Stomach (tissue), 19 donors: ENCODE measurements at regions of chr11 and their contacts with region 1.

Region 1: GRCh38 chr11:67082035-67082791 is 25.6 kb downstream of the RHOD start:
- DNase-seq: peak in 1 of 2 donors; percentile 71
- H3K4me3 ChIP-seq: no peak overlapping the region
- H3K27ac ChIP-seq: no peak overlapping the region
- H3K4me1 ChIP-seq: peaks cover 10 to 28% (median 11%) of the 10 kb centered on the region in 4 donors
- H3K27me3 ChIP-seq: peaks cover 0 to 15% (median 0%) of the 10 kb centered on the region in 3 donors
- CTCF ChIP-seq: no peak
- EP300 ChIP-seq: no peak
- POLR2A ChIP-seq: no peak

Region 2: DNA sequence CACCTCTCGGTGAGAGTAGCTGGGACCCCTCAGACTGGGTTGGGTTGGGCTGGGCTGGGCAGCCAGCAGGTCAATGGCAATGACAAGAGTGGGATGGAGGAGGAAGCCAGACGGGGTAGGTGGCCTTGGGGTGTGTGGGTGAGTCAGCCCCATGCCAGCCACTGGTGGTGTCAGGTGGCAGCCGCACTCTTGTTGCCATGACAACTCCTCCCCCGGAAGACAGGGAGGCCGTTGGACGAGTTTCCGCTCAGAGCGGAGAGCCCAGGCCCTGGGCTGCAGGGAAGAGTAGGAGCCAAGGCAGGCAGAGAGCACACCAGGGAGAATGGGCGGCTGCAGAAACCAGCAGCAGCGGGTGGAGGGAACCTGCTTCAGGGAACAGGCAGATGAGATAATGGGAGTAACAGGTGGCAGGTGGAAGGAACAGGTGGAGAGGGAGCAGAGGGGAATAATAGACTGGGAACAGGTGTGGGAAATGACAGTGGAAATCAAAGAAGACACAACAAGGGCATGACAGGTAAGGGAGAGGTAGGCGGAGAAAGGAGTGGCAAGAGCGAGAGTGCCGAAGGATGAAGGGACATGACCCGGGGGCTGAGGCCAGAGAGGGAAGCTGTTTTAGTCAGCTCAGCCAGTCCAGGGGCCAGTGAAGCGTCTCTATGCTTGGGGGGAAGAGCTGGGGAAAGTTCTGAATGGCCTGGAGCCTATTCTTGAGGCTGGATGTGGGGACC is 361.8 kb before region 1 on chr11:
- intact Hi-C with region 1: no loop called
- DNase-seq: peak; percentile 52 to 92
- H3K4me3 ChIP-seq: no peak overlapping the region
- H3K27ac ChIP-seq: peak overlapping the region in 3 of 5 donors; percentile 7 to 20 (median 14)
- H3K4me1 ChIP-seq: peaks cover 5 to 32% (median 12%) of the 10 kb centered on the region in 4 donors
- H3K27me3 ChIP-seq: peaks cover 0 to 27% (median 4%) of the 10 kb centered on the region in 3 donors
- CTCF ChIP-seq: no peak
- EP300 ChIP-seq: no peak
- POLR2A ChIP-seq: no peak

Region 3: GRCh38 chr11:67160874-67161783 is 78.9 kb after region 1 on chr11:
- intact Hi-C with region 1: loop called (anchors 10 kb)
- DNase-seq: no peak
- H3K4me3 ChIP-seq: no peak overlapping the region
- H3K27ac ChIP-seq: no peak overlapping the region
- H3K4me1 ChIP-seq: peaks cover 0 to 57% (median 30%) of the 10 kb centered on the region in 4 donors
- H3K27me3 ChIP-seq: no peaks in the 10 kb centered on the region
- CTCF ChIP-seq: no peak
- EP300 ChIP-seq: no peak
- POLR2A ChIP-seq: no peak

Region 4: GRCh38 chr11:67401495-67402191 is 319.4 kb after region 1 on chr11 and contains the start of gene PPP1CA:
- intact Hi-C with region 1: no loop called
- DNase-seq: peak; percentile 93 to 97
- H3K4me3 ChIP-seq: peak within 1 kb of the TSS; percentile 77 to 98 (median 88)
- H3K27ac ChIP-seq: peak within 1 kb of the TSS; percentile 92 to 98 (median 96)
- H3K4me1 ChIP-seq: peaks cover 31 to 62% (median 56%) of the 10 kb centered on the region in 4 donors
- H3K27me3 ChIP-seq: peaks cover 0 to 27% (median 0%) of the 10 kb centered on the region in 3 donors
- CTCF ChIP-seq: peak in 3 of 7 experiments; percentile 40 to 86 (median 49)
- EP300 ChIP-seq: no peak
- POLR2A ChIP-seq: peak in 1 of 4 donors; percentile 0
- total RNA-seq, gene PPP1CA: 28.6 to 229 (median 97.9) TPM